Right cardiac atrium (tissue), 5 donors: ENCODE measurements at regions of chr2 and their contacts with region 1.

Region 1: GRCh38 chr2:109690822-109691547 is 76.8 kb downstream of the SOWAHC start:
- DNase-seq: peak; percentile 28 to 86 (median 78)
- ATAC-seq: peak; percentile 75 to 89
- H3K4me3 ChIP-seq: no peak overlapping the region
- H3K27ac ChIP-seq: peak overlapping the region; percentile 85
- H3K4me1 ChIP-seq: peaks cover 10% of the 10 kb centered on the region
- H3K27me3 ChIP-seq: no peaks in the 10 kb centered on the region

Region 2: DNA sequence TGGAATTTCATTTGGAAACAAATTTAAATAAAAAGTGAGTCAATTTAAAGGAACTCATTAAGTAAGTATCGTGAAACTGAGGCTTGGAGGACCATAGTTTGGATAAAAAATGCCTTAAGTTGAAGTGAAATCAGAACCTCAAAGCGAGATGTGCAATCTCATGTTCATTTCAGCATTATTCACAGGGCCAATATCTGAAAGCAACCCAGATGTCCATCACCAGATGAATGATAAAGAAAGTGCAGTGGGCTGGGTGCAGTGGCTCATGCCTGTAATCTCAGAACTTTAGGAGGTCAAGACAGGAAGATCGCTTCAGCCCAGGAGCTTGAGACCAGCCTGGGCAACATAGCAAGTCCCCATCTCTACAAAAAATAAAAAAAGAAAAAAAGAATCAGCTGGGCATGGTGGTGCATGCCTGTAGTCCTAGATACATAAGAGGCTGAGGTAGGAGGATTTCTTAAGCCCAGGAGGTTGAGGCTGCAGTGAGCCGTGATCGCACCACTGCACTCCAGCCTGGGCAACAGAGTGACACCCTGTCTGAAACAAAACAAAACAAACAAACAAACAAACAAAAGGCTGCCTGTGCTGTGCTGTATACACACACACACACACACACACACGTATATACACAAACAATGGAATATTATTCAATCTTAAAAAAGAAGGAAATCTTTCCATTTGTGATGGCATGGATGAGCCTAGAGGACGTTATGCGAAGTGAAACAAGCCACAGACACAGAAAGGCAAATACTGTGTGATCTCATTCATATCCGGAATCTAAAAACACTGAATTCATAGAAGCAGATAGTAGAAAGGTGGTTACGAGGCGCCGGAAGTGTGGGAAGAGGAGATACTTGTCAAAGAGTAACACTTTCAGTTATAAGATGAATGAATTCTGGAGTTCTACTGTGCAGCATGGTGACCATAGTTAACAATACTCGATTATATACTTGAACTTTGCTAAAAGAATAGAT is 547.5 kb before region 1 on chr2:
- intact Hi-C with region 1: no loop called
- DNase-seq: no peak
- ATAC-seq: no peak
- H3K4me3 ChIP-seq: no peak overlapping the region
- H3K27ac ChIP-seq: no peak overlapping the region
- H3K4me1 ChIP-seq: peaks cover 2% of the 10 kb centered on the region
- H3K27me3 ChIP-seq: no peaks in the 10 kb centered on the region

Region 3: DNA sequence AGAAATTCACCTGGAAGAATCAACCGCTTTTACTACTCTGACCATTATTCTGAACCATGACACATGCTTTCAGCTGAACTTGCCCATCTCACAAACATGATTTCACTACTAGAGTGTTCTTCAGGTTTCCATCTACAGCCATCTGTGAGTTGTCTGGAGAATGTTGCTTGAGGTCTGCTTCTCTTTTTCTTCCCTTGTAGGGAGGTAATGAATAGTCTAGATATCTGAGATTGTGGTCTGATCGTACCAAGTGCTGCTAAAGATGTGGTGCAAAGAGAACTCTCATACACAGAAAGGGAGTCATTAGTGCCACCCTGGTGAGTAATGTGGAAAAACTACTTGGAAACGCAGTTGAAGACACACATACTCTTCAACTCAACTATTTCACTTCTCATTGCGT is 66.6 kb before region 1 on chr2:
- intact Hi-C with region 1: loop called in 1 of 4 experiments (anchors 10 kb)
- DNase-seq: no peak
- ATAC-seq: no peak
- H3K4me3 ChIP-seq: no peak overlapping the region
- H3K27ac ChIP-seq: no peak overlapping the region
- H3K4me1 ChIP-seq: no peaks in the 10 kb centered on the region
- H3K27me3 ChIP-seq: no peaks in the 10 kb centered on the region

Region 4: DNA sequence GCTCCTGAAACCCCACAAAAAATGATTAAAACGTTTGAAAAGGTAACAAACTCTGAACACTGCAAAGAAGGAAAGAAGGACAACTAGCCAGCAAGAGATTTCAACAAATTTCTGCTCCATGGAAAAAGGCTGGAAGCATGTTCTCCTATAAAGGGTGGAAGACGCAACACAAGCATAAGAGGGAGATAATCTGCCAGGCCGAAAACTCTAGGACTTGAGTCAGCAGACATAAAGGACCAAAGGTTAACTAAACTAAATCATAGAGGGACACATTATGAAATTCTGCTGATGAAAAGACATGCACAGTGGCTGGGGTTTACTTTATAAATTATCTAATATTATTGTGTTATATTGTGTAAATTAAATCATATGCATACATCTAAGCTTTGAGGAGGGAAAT is 507.0 kb after region 1 on chr2:
- intact Hi-C with region 1: no loop called
- DNase-seq: no peak
- ATAC-seq: no peak
- H3K4me3 ChIP-seq: no peak overlapping the region
- H3K27ac ChIP-seq: no peak overlapping the region
- H3K4me1 ChIP-seq: no peaks in the 10 kb centered on the region
- H3K27me3 ChIP-seq: no peaks in the 10 kb centered on the region